AG04450 (cell line): ENCODE measurements at regions of chr1 and their contacts with region 1.

Region 1: GRCh38 chr1:22416555-22417454 is 34.8 kb upstream of the ZBTB40 start:
- DNase-seq: no peak
- H3K4me3 ChIP-seq: no peak overlapping the region
- H3K27ac ChIP-seq: no peak overlapping the region
- H3K27me3 ChIP-seq: peaks cover 24% of the 10 kb centered on the region
- CTCF ChIP-seq: peak; percentile 91

Region 2: GRCh38 chr1:22105611-22106207 is 311.1 kb before region 1 on chr1:
- CTCF ChIA-PET with region 1: interaction called, 18 read pairs
- POLR2A ChIA-PET with region 1: no interaction called
- DNase-seq: peak; percentile 41
- H3K4me3 ChIP-seq: no peak overlapping the region
- H3K27ac ChIP-seq: no peak overlapping the region
- H3K27me3 ChIP-seq: no peaks in the 10 kb centered on the region
- CTCF ChIP-seq: peak; percentile 88

Region 3: GRCh38 chr1:22131875-22132486 is 284.8 kb before region 1 on chr1:
- CTCF ChIA-PET with region 1: interaction called, 15 read pairs
- POLR2A ChIA-PET with region 1: no interaction called
- DNase-seq: no peak
- H3K4me3 ChIP-seq: no peak overlapping the region
- H3K27ac ChIP-seq: no peak overlapping the region
- H3K27me3 ChIP-seq: peaks cover 2% of the 10 kb centered on the region
- CTCF ChIP-seq: peak; percentile 61

Region 4: DNA sequence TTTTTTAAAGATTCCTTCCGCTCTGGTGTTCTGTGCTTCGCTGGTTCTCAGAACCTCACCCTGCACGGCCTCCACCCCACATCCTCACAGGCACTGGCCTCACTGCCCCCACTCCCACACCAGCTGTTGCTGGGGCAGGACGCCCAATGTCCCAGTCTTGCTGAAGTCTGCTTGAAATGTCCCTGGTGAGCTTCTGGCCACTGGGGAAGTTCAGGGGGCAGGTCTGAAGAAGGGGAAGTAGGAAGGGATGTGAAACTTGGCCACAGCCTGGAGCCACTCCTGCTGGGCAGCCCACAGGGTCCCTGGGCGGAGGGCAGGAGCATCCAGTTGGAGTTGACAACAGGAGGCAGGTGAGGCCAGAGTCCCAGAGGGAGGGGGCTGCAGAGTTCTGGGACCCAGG is 219.5 kb after region 1 on chr1 and contains the start of gene C1QA:
- CTCF ChIA-PET with region 1: interaction called, 116 read pairs
- POLR2A ChIA-PET with region 1: interaction called, 4 read pairs
- DNase-seq: no peak
- H3K4me3 ChIP-seq: no peak within 1 kb of the TSS
- H3K27ac ChIP-seq: no peak within 1 kb of the TSS
- H3K27me3 ChIP-seq: peaks cover 27% of the 10 kb centered on the region
- CTCF ChIP-seq: no peak
- polyA plus RNA-seq, gene C1QA: not detected in 2 replicates

Region 5: GRCh38 chr1:22641906-22642636 is 225.3 kb after region 1 on chr1:
- CTCF ChIA-PET with region 1: interaction called, 116 read pairs
- POLR2A ChIA-PET with region 1: interaction called, 4 read pairs
- DNase-seq: no peak
- H3K4me3 ChIP-seq: no peak overlapping the region
- H3K27ac ChIP-seq: no peak overlapping the region
- H3K27me3 ChIP-seq: peaks cover 30% of the 10 kb centered on the region
- CTCF ChIP-seq: peak; percentile 94